ENCODE measurements at regions of chr10 and their contacts with region 1.

Region 1: DNA sequence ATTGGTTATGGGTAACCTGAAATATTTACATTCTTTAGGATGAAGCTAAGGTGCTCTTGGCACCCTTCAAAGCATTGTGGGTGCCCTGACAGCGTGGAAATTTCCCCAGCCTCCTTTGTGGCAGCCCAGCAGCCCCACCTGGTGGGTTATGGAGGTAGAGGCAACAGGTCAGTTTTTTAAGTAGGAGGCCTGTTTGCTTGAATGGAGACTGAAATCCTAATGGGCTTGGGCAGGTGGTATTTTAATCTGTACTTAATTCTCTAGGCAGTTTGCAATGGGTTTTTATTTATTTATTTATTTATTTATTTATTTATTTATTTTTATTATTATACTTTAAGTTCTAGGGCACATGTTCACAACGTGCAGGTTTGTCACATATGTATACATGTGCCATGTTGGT is 139.4 kb downstream of the EPC1 start:
- DNase-seq: peak; percentile 24 to 72
- ATAC-seq: peak; percentile 74 to 83 (median 80)
- H3K4me3 ChIP-seq: no peak overlapping the region
- H3K4me3 Mint-ChIP-seq: no peak overlapping the region
- H3K27ac ChIP-seq: no peak overlapping the region
- H3K27ac Mint-ChIP-seq: no peak overlapping the region
- H3K4me1 ChIP-seq: no peaks in the 10 kb centered on the region
- H3K4me1 Mint-ChIP-seq: no peaks in the 10 kb centered on the region
- H3K27me3 ChIP-seq: no peaks in the 10 kb centered on the region
- H3K27me3 Mint-ChIP-seq: peaks cover 0 to 7% of the 10 kb centered on the region in 2 donors
- CTCF ChIP-seq: peak; percentile 55

Region 2: GRCh38 chr10:31836569-31837406 is 370.8 kb before region 1 on chr10:
- intact Hi-C with region 1: loop called (anchors 5 kb)
- DNase-seq: peak in 1 of 2 donors; percentile 22
- ATAC-seq: peak in 1 of 3 donors; percentile 36
- H3K4me3 ChIP-seq: no peak overlapping the region
- H3K4me3 Mint-ChIP-seq: no peak overlapping the region
- H3K27ac ChIP-seq: no peak overlapping the region
- H3K27ac Mint-ChIP-seq: no peak overlapping the region
- H3K4me1 ChIP-seq: no peaks in the 10 kb centered on the region
- H3K4me1 Mint-ChIP-seq: peaks cover 4 to 15% of the 10 kb centered on the region in 2 donors
- H3K27me3 ChIP-seq: no peaks in the 10 kb centered on the region
- H3K27me3 Mint-ChIP-seq: no peaks in the 10 kb centered on the region
- CTCF ChIP-seq: peak; percentile 31

Region 3: DNA sequence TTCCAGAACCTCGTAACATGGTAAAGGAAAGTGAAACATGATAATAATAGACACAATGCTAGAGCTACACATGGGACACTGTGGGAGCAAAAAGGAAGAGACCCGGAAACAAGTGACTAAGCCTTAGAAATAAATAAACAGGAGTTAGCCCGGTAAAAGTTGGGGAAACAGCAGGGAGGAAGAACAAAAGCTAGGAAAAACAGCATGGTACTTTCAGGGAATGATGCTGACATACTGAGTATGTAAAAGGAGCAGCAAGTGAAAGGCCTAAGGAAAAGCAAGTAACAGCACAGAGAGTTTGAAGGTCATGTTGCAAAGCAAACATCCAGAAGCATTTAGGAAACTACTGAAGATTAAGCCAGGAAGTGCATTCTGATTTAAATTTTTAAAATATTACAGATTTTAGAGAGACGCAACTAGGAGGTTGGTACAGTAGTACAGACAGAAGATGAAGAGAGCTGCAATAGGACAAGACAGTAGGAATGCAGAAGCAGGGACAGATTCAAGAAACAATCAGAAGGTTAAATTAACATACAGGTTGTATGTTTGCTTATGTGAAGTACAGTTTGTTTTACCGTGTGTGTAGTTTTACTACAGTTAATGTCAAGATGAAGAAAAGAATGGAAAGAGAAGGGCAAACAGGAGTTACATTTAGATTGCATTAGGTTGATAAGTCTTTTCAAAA is 342.6 kb before region 1 on chr10:
- intact Hi-C with region 1: loop called (anchors 10 kb)
- DNase-seq: no peak
- ATAC-seq: no peak
- H3K4me3 ChIP-seq: no peak overlapping the region
- H3K4me3 Mint-ChIP-seq: no peak overlapping the region
- H3K27ac ChIP-seq: no peak overlapping the region
- H3K27ac Mint-ChIP-seq: peak overlapping the region in 1 of 2 donors; percentile 7
- H3K4me1 ChIP-seq: peaks cover 4% of the 10 kb centered on the region
- H3K4me1 Mint-ChIP-seq: peaks cover 25 to 31% of the 10 kb centered on the region in 2 donors
- H3K27me3 ChIP-seq: no peaks in the 10 kb centered on the region
- H3K27me3 Mint-ChIP-seq: no peaks in the 10 kb centered on the region
- CTCF ChIP-seq: no peak

Region 4: DNA sequence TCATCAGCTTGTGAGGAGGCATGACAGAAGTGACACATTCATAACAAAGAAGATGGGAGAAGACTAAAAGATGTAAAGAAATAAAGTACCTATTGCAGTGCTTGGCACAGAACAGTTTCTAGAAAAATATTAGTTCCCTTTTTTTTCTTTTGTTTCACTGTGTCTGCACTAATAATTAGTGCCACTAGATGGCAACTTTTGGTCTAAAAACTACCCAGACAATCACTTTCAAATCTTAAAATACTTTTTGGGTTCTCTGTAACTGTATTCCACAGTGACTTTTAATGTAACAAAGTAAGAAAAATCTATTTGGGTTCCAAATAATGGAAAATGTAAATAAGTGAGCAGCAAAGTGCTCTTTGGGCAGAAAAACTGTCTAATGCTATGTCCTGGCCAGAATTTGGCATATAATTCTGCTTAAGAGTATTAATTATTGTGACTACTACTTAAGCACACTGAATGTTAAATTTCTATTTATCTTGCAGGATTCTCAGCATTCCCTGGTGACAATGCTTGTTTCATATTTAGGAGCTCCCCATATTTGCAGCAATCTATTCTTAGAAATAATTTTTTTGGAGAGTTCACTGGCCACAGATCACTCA is 16.6 kb before region 1 on chr10:
- intact Hi-C with region 1: loop called (anchors 1 kb)
- DNase-seq: peak in 1 of 2 donors; percentile 68
- ATAC-seq: peak in 2 of 3 donors; percentile 59 to 64
- H3K4me3 ChIP-seq: no peak overlapping the region
- H3K4me3 Mint-ChIP-seq: no peak overlapping the region
- H3K27ac ChIP-seq: no peak overlapping the region
- H3K27ac Mint-ChIP-seq: no peak overlapping the region
- H3K4me1 ChIP-seq: no peaks in the 10 kb centered on the region
- H3K4me1 Mint-ChIP-seq: peaks cover 0 to 5% of the 10 kb centered on the region in 2 donors
- H3K27me3 ChIP-seq: no peaks in the 10 kb centered on the region
- H3K27me3 Mint-ChIP-seq: no peaks in the 10 kb centered on the region
- CTCF ChIP-seq: peak; percentile 83